ENCODE measurements at regions of chr5 and their contacts with region 1.

Region 1: GRCh38 chr5:16934123-16934522 is 2.0 kb downstream of the MYO10 start:
- DNase-seq: peak in 4 of 5 donors; percentile 37 to 74 (median 54)
- ATAC-seq: peak in 3 of 4 donors; percentile 43 to 79 (median 52)
- H3K4me3 ChIP-seq: peak overlapping the region in 11 of 12 donors; percentile 60 to 90 (median 74)
- H3K27ac ChIP-seq: no peak overlapping the region
- H3K4me1 ChIP-seq: peaks cover 0 to 28% (median 11%) of the 10 kb centered on the region in 12 donors
- H3K27me3 ChIP-seq: peaks cover 0 to 65% (median 24%) of the 10 kb centered on the region in 9 donors
- CTCF ChIP-seq: peak; percentile 70 to 86 (median 78)
- POLR2A ChIP-seq: no peak

Region 2: DNA sequence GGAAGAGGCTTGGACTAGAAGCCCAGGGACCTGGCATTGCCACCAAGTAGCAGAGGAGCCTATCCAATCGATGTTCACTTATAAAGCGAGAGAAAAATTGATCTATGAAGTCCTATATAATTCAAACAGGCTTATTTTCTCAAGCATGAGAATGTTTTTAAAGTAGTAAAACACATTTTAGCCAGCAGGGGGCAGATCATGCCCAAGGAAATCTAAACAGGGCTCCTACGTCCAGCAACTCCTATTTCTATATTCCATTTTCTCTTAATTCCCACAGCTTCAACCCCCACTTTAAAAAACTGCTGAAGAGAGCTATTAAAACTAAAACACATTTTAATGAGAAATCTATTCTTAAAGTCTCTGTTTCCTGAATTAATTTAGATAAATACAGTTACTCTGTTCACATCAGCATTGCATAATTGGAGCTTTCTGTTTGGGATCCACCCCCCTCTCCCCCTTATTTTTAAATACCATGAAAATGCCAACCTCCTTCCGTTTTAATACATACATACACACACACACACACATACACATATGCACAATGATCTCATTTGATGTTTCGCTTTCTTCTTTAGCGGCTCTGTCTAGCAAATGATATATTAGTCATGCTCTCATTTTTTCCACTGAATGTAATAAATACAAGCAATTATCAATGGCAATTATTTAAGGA is 143.0 kb before region 1 on chr5:
- intact Hi-C with region 1: loop called in 7 of 10 experiments (anchors 2 to 10 kb)
- DNase-seq: no peak
- ATAC-seq: no peak
- H3K4me3 ChIP-seq: peak overlapping the region in 1 of 12 donors; percentile 1
- H3K27ac ChIP-seq: no peak overlapping the region
- H3K4me1 ChIP-seq: peaks cover 0 to 4% (median 0%) of the 10 kb centered on the region in 12 donors
- H3K27me3 ChIP-seq: no peaks in the 10 kb centered on the region
- CTCF ChIP-seq: peak; percentile 66 to 84 (median 79)
- POLR2A ChIP-seq: no peak

Region 3: DNA sequence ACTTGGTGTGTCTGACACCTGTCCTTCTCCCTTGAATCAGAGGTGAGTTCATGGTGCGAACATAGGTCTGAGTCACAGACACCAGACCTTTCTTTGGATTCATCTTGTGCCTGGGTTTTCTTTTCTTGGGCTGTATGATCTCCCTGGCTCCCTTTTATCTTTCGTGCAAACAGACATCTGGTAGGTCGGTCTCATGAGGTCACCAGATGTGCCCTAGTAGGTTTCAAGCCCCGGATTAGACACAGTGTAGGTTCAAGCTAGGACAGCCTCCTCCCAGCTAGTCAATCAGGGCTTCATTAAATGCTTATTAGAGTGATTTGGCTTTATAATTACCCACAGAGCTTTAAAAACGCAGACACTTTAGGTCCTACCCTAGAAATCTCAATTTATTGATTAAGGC is 107.9 kb after region 1 on chr5:
- intact Hi-C with region 1: loop called in 1 of 10 experiments (anchors 10 kb)
- DNase-seq: no peak
- ATAC-seq: no peak
- H3K4me3 ChIP-seq: no peak overlapping the region
- H3K27ac ChIP-seq: no peak overlapping the region
- H3K4me1 ChIP-seq: peaks cover 0 to 10% (median 0%) of the 10 kb centered on the region in 12 donors
- H3K27me3 ChIP-seq: no peaks in the 10 kb centered on the region
- CTCF ChIP-seq: no peak
- POLR2A ChIP-seq: no peak

Region 4: DNA sequence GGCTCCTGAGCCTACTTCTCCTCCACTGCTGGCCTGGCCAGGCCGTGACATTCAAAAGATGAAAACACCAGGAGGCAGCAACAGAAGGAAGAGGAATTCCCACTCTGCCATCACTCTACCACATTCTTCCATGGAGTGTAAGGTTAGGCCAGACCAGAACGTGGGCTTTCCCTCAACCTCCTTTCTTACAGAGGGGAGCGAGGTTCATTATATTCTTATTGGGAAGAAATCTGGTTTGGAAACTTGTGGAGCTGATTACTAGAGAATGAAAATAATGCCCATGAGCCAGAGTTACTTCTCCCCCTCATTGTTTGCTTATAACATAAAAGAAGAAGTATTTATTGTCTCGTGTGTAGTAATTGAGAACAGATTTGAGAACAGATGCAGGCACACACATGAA is 147.0 kb after region 1 on chr5:
- intact Hi-C with region 1: loop called in 5 of 10 experiments (anchors 2 to 10 kb)
- DNase-seq: no peak
- ATAC-seq: no peak
- H3K4me3 ChIP-seq: no peak overlapping the region
- H3K27ac ChIP-seq: no peak overlapping the region
- H3K4me1 ChIP-seq: peaks cover 0 to 18% (median 3%) of the 10 kb centered on the region in 12 donors
- H3K27me3 ChIP-seq: no peaks in the 10 kb centered on the region
- CTCF ChIP-seq: no peak
- POLR2A ChIP-seq: no peak

Region 5: GRCh38 chr5:17189381-17190036 is 255.4 kb after region 1 on chr5:
- intact Hi-C with region 1: loop called (anchors 1 to 10 kb)
- DNase-seq: peak; percentile 61 to 83 (median 78)
- ATAC-seq: peak; percentile 50 to 75 (median 64)
- H3K4me3 ChIP-seq: no peak overlapping the region
- H3K27ac ChIP-seq: no peak overlapping the region
- H3K4me1 ChIP-seq: peaks cover 0 to 21% (median 6%) of the 10 kb centered on the region in 12 donors
- H3K27me3 ChIP-seq: no peaks in the 10 kb centered on the region
- CTCF ChIP-seq: peak; percentile 77 to 90 (median 82)
- POLR2A ChIP-seq: no peak

Measured in heart left ventricle (tissue), 16 donors.